Activated naive CD4-positive, alpha-beta T cell treated with anti-CD3 and anti-CD28 coated beads for 36 hours (primary cell): ENCODE measurements at regions of chr9 and their contacts with region 1.

Region 1: GRCh38 chr9:72871685-72872084 is 81.2 kb downstream of the ALDH1A1 start:
- DNase-seq: no peak
- H3K4me3 Mint-ChIP-seq: no peak overlapping the region
- H3K27ac Mint-ChIP-seq: no peak overlapping the region
- H3K4me1 Mint-ChIP-seq: no peaks in the 10 kb centered on the region
- H3K27me3 Mint-ChIP-seq: peaks cover 3% of the 10 kb centered on the region

Region 2: GRCh38 chr9:73023025-73023541 is 151.4 kb after region 1 on chr9:
- CTCF ChIA-PET with region 1: no interaction called
- intact Hi-C with region 1: loop called (anchors 1 kb)
- DNase-seq: peak; percentile 68
- H3K4me3 Mint-ChIP-seq: no peak overlapping the region
- H3K27ac Mint-ChIP-seq: no peak overlapping the region
- H3K4me1 Mint-ChIP-seq: peaks cover 6% of the 10 kb centered on the region
- H3K27me3 Mint-ChIP-seq: peaks cover 15% of the 10 kb centered on the region

Region 3: DNA sequence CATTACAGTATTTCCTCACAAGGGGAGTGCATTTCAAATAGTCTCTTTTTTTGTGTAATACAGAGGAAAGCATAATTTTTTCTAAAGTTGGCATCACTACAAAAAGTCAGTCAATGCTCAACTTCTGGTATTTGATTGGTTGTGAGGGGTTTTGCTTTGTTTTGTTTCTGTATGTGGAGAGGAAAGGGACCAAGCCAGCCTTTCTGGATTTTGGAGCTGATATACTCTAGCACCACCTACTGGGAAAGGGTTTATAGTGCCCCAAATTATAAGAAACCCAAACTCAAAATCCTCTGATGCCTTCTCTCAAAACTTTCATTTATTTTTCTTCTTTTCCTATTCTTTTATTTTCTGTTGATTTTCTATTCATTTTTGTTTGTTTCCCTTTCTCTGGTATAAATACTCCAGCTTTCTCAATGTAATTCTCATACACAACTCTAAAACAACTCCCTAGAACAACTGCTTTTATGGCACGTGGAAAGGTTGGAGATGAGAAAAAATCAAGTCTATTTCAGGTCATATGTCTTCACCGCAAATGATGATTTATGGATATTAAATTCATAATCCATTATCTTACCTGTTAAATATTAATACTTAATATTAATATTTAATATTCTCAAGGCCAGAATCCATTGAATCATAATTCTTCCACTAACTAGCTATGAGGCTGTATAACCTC is 210.4 kb after region 1 on chr9:
- CTCF ChIA-PET with region 1: interaction called, 3 read pairs
- intact Hi-C with region 1: loop called (anchors 5 kb)
- DNase-seq: no peak
- H3K4me3 Mint-ChIP-seq: no peak overlapping the region
- H3K27ac Mint-ChIP-seq: no peak overlapping the region
- H3K4me1 Mint-ChIP-seq: no peaks in the 10 kb centered on the region
- H3K27me3 Mint-ChIP-seq: peaks cover 6% of the 10 kb centered on the region